ENCODE measurements at regions of chr15 and their contacts with region 1.

Region 1: GRCh38 chr15:90869601-90870353 is 1.4 kb downstream of the FURIN start:
- DNase-seq: peak; percentile 87
- H3K4me3 Mint-ChIP-seq: peak overlapping the region; percentile 93
- H3K27ac Mint-ChIP-seq: peak overlapping the region; percentile 99
- H3K4me1 Mint-ChIP-seq: peaks cover 46% of the 10 kb centered on the region
- H3K27me3 Mint-ChIP-seq: no peaks in the 10 kb centered on the region

Region 2: GRCh38 chr15:90648137-90649070 is 221.4 kb before region 1 on chr15:
- CTCF ChIA-PET with region 1: no interaction called
- intact Hi-C with region 1: loop called (anchors 1 kb)
- DNase-seq: peak; percentile 82
- H3K4me3 Mint-ChIP-seq: peak overlapping the region; percentile 58
- H3K27ac Mint-ChIP-seq: peak overlapping the region; percentile 91
- H3K4me1 Mint-ChIP-seq: peaks cover 30% of the 10 kb centered on the region
- H3K27me3 Mint-ChIP-seq: peaks cover 4% of the 10 kb centered on the region

Region 3: DNA sequence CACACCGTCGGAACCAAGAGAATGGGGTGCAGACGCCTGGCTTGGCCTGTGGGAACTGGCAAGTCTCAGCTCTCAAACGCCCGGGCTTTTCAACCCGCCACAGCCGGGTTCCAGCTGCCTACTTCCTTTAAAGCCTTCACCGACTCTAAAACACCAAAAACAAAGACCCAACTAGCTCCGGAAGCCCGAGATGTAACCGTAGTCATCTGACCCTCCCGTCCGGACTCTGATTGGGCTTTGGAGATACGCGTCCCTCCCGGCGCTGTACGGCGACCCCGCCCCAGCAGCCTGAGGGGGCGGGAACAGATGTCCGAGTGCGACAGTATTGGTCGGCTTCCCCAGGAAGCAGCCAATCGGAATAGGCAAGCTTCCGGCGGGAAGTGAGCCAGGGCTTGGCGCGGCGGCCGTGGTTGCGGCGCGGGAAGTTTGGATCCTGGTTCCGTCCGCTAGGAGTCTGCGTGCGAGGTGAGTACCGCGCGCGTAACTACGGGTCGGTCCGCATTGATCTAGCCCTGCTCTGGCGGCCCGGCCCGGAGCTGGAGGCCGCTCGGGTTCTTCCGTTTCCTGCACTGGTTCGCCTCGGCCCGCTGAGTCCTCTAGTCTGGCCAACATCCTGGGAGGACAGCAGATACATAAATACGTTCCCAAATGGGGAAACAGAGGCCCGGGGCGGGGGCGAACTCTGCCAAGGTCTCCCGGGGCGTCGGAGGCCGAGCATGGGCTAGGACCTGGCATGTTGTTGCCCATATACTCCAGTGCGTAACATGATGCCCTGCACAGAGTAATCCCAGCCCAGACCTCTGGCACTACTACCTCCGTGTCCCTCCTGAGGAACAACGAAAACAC is 152.6 kb before region 1 on chr15 and contains the start of gene BLM:
- CTCF ChIA-PET with region 1: no interaction called
- intact Hi-C with region 1: loop called (anchors 2 kb)
- DNase-seq: peak; percentile 97
- H3K4me3 Mint-ChIP-seq: peak within 1 kb of the TSS; percentile 87
- H3K27ac Mint-ChIP-seq: peak within 1 kb of the TSS; percentile 90
- H3K4me1 Mint-ChIP-seq: peaks cover 24% of the 10 kb centered on the region
- H3K27me3 Mint-ChIP-seq: no peaks in the 10 kb centered on the region
- total RNA-seq, gene BLM: 62.9 to 70.4 TPM

Region 4: GRCh38 chr15:90838141-90838540 is 31.6 kb before region 1 on chr15:
- CTCF ChIA-PET with region 1: interaction called, 7 read pairs
- intact Hi-C with region 1: loop called (anchors 1 kb)
- DNase-seq: peak; percentile 97
- H3K4me3 Mint-ChIP-seq: peak overlapping the region; percentile 84
- H3K27ac Mint-ChIP-seq: peak overlapping the region; percentile 97
- H3K4me1 Mint-ChIP-seq: peaks cover 66% of the 10 kb centered on the region
- H3K27me3 Mint-ChIP-seq: no peaks in the 10 kb centered on the region

Region 5: DNA sequence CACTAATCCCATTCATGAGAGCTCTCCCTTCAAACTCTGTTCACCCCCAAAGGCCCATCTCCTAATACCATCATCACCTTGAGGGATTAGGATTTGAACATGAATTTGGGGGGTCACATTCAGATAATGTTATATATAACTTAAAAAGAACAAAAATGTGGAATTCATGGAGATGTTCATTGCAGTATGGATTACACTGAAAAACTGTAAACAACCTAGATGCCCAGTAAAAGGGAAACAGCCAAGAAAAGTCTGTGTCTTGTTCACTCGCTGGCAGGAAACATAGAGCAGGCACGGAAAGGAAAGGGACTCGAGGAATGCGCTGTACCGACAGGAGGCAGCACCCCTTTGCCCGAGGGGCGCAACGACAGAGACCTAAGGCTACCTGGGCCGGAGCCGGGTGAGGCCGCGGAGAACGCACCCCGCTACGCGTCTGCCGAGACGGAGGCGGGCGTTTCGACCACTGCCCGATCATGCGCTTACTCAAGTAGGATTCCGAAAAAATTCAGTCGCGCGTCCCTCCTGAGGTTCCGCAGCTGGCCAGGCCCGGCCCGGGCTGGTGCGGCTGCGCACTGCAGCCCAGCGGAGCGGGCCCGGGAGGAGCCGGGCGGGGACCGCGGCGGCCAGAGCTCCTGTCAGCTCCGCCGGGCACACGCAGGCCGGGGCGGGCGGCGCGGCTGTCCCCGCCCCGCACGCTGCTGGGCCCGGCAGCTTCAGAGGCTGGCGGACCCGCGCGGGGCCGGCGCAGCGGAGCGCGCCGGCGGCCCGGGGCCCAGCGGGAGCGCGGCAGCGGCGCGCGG is 32.5 kb after region 1 on chr15:
- CTCF ChIA-PET with region 1: no interaction called
- intact Hi-C with region 1: loop called (anchors 2 kb)
- DNase-seq: peak; percentile 84
- H3K4me3 Mint-ChIP-seq: peak overlapping the region; percentile 86
- H3K27ac Mint-ChIP-seq: peak overlapping the region; percentile 88
- H3K4me1 Mint-ChIP-seq: peaks cover 27% of the 10 kb centered on the region
- H3K27me3 Mint-ChIP-seq: no peaks in the 10 kb centered on the region